ENCODE measurements at regions of chr4 and their contacts with region 1.

Region 1: GRCh38 chr4:183261953-183262775 is 57.9 kb downstream of the CLDN22 start:
- DNase-seq: peak; percentile 70 to 94 (median 83)
- H3K4me3 ChIP-seq: no peak overlapping the region
- H3K27ac ChIP-seq: peak overlapping the region in 3 of 5 donors; percentile 13 to 52 (median 24)
- H3K4me1 ChIP-seq: no peaks in the 10 kb centered on the region
- H3K27me3 ChIP-seq: no peaks in the 10 kb centered on the region
- CTCF ChIP-seq: peak; percentile 70 to 87 (median 71)
- POLR2A ChIP-seq: no peak

Region 2: DNA sequence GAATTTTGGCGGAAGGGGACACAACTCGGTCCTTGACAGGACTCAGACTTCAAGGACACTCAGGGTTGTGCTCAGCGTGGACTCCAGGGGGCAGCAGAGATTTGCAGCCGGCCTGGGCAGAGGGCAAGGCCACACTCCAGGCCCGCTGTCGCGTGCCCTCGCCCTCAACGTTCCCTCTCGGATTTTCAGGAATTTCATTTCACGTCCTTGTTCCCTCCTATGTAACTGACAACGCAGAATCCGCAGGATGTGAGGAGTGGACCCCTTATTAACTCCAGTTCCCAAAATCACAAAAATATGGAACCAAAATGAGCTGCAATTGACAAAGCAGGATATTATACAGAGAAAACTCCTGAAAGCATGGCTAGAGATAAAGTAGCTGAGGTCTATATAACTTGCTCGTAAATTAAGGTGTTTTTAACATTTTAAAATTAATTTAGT is 323.9 kb before region 1 on chr4:
- intact Hi-C with region 1: loop called (anchors 5 to 10 kb)
- DNase-seq: peak; percentile 62 to 83 (median 74)
- H3K4me3 ChIP-seq: no peak overlapping the region
- H3K27ac ChIP-seq: no peak overlapping the region
- H3K4me1 ChIP-seq: no peaks in the 10 kb centered on the region
- H3K27me3 ChIP-seq: peaks cover 4% of the 10 kb centered on the region
- CTCF ChIP-seq: peak; percentile 69 to 93 (median 82)
- POLR2A ChIP-seq: no peak